ENCODE measurements at regions of chr1 and their contacts with region 1.

Region 1: DNA sequence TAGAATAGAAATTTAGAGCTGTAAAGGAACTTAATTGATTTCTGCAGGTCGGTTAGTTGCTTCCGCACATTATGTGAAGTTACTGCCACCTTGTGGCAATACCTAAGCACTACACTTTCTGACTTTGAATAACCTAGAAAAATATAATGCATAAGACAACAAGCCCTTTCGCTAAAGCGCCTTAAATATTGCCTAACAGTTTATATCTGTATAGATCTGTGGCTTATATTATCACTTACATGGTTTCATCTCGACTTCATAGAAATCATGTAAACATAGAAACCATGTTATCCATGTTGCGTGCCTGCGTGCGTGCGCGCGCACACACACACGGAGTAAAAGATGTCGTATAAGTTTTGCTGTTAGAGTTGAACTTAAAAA is 10.9 kb upstream of the IFI16 start:
- DNase-seq: peak in 25 of 35 experiments; percentile 8 to 82 (median 28)
- ATAC-seq: peak; percentile 62 to 71 (median 69)
- H3K4me3 ChIP-seq: no peak overlapping the region
- H3K4me3 Mint-ChIP-seq: peak overlapping the region; percentile 29 to 40 (median 29)
- H3K27ac ChIP-seq: no peak overlapping the region
- H3K27ac Mint-ChIP-seq: peak overlapping the region; percentile 75 to 77
- H3K4me1 ChIP-seq: peaks cover 0 to 17% of the 10 kb centered on the region in 2 experiments
- H3K4me1 Mint-ChIP-seq: peaks cover 25 to 43% (median 36%) of the 10 kb centered on the region in 3 donors
- H3K27me3 ChIP-seq: no peaks in the 10 kb centered on the region
- H3K27me3 Mint-ChIP-seq: no peaks in the 10 kb centered on the region

Region 2: DNA sequence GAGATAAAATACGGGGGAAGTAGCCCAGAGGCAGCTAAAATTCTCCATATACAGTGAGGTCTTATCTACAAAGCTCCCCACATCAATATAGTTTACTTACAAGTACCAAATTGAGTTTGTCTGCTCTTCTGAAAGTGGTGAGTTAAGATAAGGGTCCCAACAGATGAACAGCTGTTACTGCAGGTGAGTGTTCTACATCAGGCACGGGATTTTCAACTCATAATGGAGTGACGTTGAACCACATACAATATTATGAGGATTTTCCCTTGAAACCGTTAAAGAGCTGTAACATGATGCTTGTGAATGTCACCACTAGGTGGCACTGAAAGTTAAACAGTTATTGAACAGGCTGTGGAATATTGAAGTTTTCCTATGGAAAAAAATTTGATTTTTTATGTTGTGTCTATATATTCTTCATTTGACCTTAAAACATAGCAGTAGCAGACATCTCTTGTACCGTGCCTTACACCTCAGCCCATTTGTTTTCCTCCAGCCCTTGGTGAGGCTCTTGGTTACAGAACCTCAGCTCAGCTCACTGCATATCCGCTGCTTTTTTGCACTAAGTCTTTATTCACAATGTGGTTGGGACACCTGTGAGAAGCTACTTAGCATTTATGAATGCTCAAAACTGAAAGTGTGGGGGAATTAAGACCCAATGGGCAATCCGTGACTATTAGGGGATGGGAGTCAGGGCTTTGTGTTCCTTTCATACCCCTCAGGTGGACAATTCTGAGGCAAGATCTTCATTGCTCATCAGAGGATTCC is 794.9 kb before region 1 on chr1:
- CTCF ChIA-PET with region 1: interaction called, 5 to 16 read pairs
- POLR2A ChIA-PET with region 1: no interaction called
- DNase-seq: peak in 3 of 35 experiments; percentile 5 to 70 (median 16)
- ATAC-seq: peak in 3 of 4 experiments; percentile 65 to 75 (median 71)
- H3K4me3 ChIP-seq: peak overlapping the region in 1 of 2 donors; percentile 32
- H3K4me3 Mint-ChIP-seq: no peak overlapping the region
- H3K27ac ChIP-seq: no peak overlapping the region
- H3K27ac Mint-ChIP-seq: no peak overlapping the region
- H3K4me1 ChIP-seq: peaks cover 3 to 6% of the 10 kb centered on the region in 2 experiments
- H3K4me1 Mint-ChIP-seq: peaks cover 10 to 16% (median 13%) of the 10 kb centered on the region in 3 donors
- H3K27me3 ChIP-seq: peaks cover 0 to under 1% of the 10 kb centered on the region in 2 experiments
- H3K27me3 Mint-ChIP-seq: peaks cover 18 to 29% of the 10 kb centered on the region in 2 donors

Region 3: DNA sequence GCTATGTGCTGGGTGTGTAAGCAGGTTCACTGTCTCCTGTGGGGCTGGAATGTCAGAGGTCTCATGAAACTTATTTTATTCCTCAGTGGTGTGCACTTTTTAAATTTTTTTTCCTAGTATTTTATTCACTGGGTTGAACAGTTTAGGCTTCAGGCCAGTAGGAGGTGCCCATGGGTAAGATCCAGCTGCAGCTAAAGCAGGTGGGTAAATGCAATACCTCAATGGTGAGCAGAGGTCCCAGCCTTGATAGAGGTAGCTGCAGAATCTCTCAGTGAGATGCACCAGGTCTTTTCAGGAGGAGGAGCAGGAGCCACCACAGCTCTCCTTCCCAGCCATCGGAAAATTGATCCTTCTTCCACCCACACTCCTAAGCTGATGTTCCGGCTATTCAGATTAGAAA is 205.2 kb before region 1 on chr1:
- CTCF ChIA-PET with region 1: interaction called in 1 of 2 experiments, 13 read pairs
- POLR2A ChIA-PET with region 1: no interaction called
- DNase-seq: peak in 28 of 35 experiments; percentile 3 to 54 (median 22)
- ATAC-seq: peak in 2 of 4 experiments; percentile 35 to 62
- H3K4me3 ChIP-seq: no peak overlapping the region
- H3K4me3 Mint-ChIP-seq: no peak overlapping the region
- H3K27ac ChIP-seq: no peak overlapping the region
- H3K27ac Mint-ChIP-seq: no peak overlapping the region
- H3K4me1 ChIP-seq: no peaks in the 10 kb centered on the region
- H3K4me1 Mint-ChIP-seq: no peaks in the 10 kb centered on the region
- H3K27me3 ChIP-seq: no peaks in the 10 kb centered on the region
- H3K27me3 Mint-ChIP-seq: peaks cover 0 to 15% of the 10 kb centered on the region in 2 donors

Region 4: DNA sequence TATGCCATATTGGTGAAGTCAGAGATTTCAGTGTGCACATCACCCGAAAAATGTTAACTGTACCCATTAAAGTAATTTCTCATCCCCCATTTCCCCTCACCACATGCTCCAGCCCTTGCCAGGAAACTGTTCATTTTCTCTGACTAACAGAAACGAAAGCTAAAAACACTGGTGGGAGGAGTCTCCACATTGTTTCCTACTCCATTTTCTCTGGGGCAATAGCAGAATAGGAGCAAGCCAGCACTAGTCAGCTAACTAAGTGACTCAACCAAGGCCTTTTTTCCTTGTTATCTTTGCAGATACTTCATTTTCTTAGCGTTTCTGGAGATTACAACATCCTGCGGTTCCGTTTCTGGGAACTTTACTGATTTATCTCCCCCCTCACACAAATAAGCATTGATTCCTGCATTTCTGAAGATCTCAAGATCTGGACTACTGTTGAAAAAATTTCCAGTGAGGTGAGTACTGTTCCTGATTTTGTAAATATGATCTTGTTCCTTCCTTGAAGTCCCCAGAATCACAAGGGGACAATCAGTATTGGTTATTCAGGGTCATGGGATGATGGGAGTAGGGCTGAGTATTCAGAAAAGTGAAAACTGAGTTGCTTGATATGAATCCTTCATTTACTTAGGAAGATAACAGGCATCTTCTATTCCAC is 11.1 kb after region 1 on chr1 and contains the start of gene IFI16:
- CTCF ChIA-PET with region 1: interaction called in 1 of 2 experiments, 22 read pairs
- POLR2A ChIA-PET with region 1: interaction called in 1 of 2 experiments, 7 read pairs
- DNase-seq: peak in 30 of 35 experiments; percentile 5 to 82 (median 42)
- ATAC-seq: peak; percentile 78 to 83 (median 81)
- H3K4me3 ChIP-seq: peak within 1 kb of the TSS; percentile 65 to 81
- H3K4me3 Mint-ChIP-seq: peak within 1 kb of the TSS; percentile 91 to 93 (median 92)
- H3K27ac ChIP-seq: peak within 1 kb of the TSS; percentile 65
- H3K27ac Mint-ChIP-seq: peak within 1 kb of the TSS; percentile 93 to 95
- H3K4me1 ChIP-seq: peaks cover 19 to 33% of the 10 kb centered on the region in 2 experiments
- H3K4me1 Mint-ChIP-seq: peaks cover 46 to 70% (median 51%) of the 10 kb centered on the region in 3 donors
- H3K27me3 ChIP-seq: no peaks in the 10 kb centered on the region
- H3K27me3 Mint-ChIP-seq: no peaks in the 10 kb centered on the region
- total RNA-seq, gene IFI16: 78.7 to 123 (median 106) TPM